ENCODE measurements at regions of chr7 and their contacts with region 1.

Region 1: DNA sequence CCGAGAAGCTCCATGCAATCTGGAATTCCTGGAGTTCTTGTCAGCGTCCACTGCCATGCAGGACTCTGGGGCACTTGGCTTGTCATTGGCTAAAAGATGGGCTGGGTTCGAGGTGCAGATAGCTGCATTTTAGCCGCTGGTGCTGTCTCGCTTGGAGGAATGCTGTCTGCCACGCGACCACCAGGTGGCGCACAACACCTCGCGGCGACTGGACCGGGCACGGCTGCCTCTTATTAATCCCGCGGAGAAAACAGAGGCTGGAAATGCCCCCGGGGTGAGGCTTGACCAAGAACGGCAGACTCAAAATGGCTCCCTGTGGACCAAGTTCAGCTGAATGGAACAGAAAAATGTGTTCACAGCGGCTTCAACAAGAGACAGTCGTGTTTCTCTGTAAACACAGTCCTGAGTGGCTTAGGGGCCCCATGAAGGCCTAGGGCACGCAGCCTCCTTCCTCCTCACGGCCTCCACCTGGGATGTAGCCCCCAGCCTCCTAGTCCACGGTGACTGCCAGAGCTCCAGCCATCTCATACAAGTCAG is 46.2 kb downstream of the AOC1 start:
- DNase-seq: peak; percentile 70 to 78
- H3K4me3 ChIP-seq: no peak overlapping the region
- H3K27ac ChIP-seq: no peak overlapping the region
- H3K4me1 ChIP-seq: no peaks in the 10 kb centered on the region
- H3K27me3 ChIP-seq: no peaks in the 10 kb centered on the region
- CTCF ChIP-seq: peak; percentile 82 to 91 (median 89)
- POLR2A ChIP-seq: no peak

Region 2: DNA sequence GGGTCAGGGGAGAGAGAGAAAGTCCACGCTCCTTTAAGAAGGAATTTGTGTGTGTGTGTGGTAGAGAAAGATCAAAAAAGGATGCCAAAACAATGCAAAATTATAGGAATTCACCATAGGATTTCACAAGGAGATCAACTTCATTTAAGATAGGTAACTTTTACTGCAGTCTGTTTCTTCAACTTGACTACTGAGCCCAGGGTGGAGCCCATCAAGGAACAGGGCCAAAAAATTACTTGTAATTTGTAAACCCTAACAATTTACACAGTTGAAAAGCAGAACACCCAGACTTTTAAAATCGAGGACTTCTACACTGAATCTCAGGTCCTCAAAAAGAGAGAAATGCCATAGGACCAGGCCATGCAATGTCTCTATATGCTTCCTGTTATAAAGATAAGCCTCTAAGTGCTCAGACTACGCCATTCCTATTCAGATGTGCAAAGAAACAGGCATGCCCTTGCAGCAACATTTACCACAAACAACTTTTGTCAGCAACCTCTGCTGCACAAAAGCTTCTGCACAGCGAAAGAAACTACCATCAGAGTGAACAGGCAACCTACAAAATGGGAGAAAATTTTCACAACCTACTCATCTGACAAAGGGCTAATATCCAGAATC is 341.9 kb before region 1 on chr7:
- intact Hi-C with region 1: no loop called
- DNase-seq: no peak
- H3K4me3 ChIP-seq: no peak overlapping the region
- H3K27ac ChIP-seq: no peak overlapping the region
- H3K4me1 ChIP-seq: no peaks in the 10 kb centered on the region
- H3K27me3 ChIP-seq: no peaks in the 10 kb centered on the region
- CTCF ChIP-seq: no peak
- POLR2A ChIP-seq: no peak

Region 3: GRCh38 chr7:150955519-150956394 is 57.2 kb after region 1 on chr7:
- intact Hi-C with region 1: no loop called
- DNase-seq: peak in 1 of 2 donors; percentile 14
- H3K4me3 ChIP-seq: no peak overlapping the region
- H3K27ac ChIP-seq: no peak overlapping the region
- H3K4me1 ChIP-seq: peaks cover 5 to 7% of the 10 kb centered on the region in 2 donors
- H3K27me3 ChIP-seq: no peaks in the 10 kb centered on the region
- CTCF ChIP-seq: no peak
- POLR2A ChIP-seq: no peak

Region 4: DNA sequence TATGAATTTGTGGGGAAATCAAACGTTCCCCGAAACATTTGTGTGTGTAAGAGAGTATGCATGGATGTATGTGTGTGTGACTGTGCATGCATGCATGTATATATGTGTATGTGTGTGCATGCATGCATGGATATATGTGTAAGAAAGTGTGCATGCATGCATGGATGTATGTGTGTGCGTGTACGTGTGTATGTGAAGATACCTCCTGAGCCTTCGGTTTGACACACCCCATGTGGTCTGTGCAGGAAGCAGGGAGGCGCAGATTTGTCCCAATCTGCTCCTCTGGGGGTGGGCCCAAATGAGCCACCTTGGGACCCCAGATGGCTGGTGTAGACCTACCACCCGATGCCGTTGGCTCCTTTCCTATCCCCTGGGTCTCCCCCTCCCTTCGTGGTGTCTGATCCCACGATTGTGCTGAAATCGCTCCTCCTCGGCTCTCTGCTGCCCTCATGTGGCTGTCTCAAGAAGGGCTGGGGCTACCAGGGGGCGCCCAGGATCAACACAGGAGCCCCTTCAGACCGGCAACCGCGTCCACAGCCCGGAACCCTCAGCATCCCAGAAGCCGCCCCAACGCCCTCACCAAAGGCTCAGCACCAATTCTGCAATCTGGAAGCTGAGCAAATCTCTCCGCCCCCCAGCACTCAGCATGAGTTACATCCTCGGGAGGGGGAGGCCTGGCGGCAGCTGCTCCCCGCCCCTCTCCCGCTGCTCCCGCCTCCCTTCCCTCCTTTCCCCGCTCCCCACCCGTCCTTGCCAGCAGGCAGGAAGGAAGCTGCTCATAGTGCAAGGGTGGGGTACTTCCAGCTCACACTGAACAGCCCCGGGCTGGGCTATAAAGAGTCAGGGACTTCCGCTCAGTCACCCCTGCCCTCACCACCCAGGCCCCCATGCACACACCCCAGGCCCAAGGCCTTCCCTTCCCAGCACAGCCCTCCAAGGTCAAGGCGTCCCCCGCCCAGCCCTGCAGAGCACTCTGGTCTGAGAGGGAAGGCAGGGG is 90.0 kb after region 1 on chr7:
- intact Hi-C with region 1: loop called (anchors 5 kb)
- DNase-seq: peak; percentile 22 to 29
- H3K4me3 ChIP-seq: no peak overlapping the region
- H3K27ac ChIP-seq: peak overlapping the region in 2 of 3 donors; percentile 11 to 41
- H3K4me1 ChIP-seq: no peaks in the 10 kb centered on the region
- H3K27me3 ChIP-seq: no peaks in the 10 kb centered on the region
- CTCF ChIP-seq: peak; percentile 37 to 65 (median 58)
- POLR2A ChIP-seq: no peak

Region 5: DNA sequence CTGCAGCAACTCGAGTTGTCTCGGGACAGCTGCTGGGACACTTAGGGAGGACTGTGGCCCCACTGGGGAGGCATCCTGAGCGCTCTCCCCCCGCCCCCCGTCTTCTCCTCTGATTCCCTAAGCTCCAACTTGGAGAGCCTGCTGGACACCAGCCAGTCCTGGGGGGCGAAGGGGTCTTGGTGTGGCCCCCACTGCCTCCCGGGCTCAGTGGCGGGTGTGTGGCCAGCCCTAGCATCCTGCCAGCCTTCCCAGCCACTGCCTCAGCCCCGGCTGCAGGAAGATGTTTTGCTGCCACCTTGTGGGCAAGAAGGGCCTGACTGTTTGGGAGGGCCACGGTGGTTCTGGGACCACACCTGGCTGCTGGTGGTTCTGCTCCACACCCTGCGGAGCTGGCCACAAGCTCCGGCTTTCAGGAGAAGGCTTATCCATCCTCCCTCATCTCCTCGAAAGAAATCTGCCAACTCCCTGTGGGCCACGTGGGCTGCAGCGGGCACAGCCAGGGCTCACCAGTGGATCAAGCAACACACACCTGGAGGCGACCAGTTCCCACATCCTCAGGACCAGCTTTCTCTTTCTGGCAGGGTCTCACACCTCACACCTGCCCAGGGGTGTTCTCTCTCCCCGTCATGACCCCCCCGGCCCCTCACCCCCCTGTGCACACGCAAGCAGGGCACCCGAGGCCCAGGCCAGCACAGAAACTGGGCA is 212.6 kb after region 1 on chr7:
- intact Hi-C with region 1: loop called (anchors 5 kb)
- DNase-seq: peak; percentile 82 to 84
- H3K4me3 ChIP-seq: no peak overlapping the region
- H3K27ac ChIP-seq: no peak overlapping the region
- H3K4me1 ChIP-seq: peaks cover 9 to 20% of the 10 kb centered on the region in 2 donors
- H3K27me3 ChIP-seq: no peaks in the 10 kb centered on the region
- CTCF ChIP-seq: peak; percentile 77 to 93 (median 84)
- POLR2A ChIP-seq: no peak